ENCODE measurements at regions of chr4 and their contacts with region 1.

Region 1: DNA sequence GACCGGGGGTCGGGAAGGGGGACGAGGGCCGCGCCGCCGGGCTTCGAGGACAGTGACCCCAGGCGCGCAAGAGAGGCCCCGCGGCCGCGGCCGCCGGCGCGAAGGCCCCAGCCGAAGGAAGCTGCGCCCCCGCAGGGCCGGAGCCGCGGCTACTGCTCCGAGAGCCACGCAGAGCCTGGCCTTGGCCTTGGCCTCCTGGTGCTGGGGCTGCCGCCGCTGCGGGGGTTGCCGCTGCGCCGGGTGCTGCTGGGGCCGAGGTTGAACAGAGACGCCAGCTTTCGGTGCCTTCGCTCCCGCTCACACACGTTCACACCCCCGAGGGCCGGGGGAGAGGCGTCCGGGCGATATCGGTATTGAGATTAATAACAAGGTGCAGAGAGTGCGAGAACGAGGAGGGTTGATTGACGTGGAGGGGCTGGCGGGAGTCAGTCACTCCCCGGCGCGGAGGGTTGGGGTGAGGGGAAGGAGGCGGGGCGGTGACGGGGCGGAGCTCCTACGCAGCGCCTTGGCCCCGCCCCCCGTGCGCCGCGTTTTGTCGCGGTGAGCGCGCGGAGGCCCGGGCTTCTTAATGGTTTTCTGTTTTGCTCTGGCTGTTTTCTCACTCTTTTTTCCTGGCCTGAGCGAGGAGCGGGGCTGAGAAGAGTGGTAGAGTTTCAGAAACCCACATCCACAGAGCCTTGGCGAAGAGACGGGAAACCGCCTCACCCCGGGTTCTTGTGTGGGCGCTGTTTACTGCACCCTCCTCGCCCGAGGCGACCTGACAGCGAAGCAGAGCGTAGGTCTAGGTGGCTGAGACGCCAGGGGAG is 878 bp upstream of the CNOT6L start:
- DNase-seq: peak; percentile 95
- H3K4me3 ChIP-seq: peak overlapping the region; percentile 98 to 99
- H3K27ac ChIP-seq: peak overlapping the region; percentile 99 to 100
- H3K4me1 ChIP-seq: no peaks in the 10 kb centered on the region
- H3K27me3 ChIP-seq: no peaks in the 10 kb centered on the region
- CTCF ChIP-seq: peak in 1 of 4 experiments; percentile 11
- POLR2A ChIP-seq: peak; percentile 97

Region 2: DNA sequence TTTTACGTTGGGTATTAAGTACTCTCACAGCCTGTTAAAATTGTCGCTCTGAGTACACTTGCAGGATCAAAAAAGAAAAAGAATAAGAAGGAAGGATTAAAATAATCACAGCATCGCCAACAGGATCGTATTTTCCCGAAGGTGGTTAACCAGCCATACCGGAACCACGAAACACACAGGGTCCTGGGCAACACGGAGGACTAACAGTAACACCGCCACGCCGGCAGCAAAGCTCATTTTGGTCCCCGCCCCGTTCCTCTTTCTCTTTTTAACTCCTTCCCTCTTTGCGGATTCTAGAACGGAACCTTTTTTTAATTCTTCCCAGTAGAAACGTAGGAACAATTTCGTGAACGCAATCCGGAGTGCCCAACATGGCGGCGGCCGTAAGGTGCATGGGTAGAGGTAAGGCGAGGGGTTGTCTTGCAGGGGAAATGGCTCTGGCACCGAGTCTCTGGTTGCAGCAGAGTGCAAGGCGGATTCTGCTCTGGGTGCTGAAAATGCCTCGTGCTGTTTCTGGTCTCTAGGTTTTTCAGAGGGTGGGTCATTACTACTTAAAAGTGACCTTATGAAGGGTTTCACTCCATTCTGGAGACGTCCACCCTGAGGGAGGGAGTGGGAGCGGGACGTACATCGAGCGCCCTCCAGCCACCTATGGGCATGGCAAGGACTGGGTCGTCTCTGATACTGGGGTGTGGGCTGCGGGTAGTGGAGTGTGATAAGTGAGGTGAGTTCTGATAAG is 42.6 kb after region 1 on chr4 and contains the start of gene MRPL1:
- intact Hi-C with region 1: loop called (anchors 2 kb)
- DNase-seq: peak; percentile 92
- H3K4me3 ChIP-seq: peak within 1 kb of the TSS; percentile 48 to 53
- H3K27ac ChIP-seq: peak within 1 kb of the TSS; percentile 93 to 98
- H3K4me1 ChIP-seq: no peaks in the 10 kb centered on the region
- H3K27me3 ChIP-seq: no peaks in the 10 kb centered on the region
- CTCF ChIP-seq: peak in 1 of 4 experiments; percentile 14
- POLR2A ChIP-seq: peak; percentile 64
- total RNA-seq, gene MRPL1: 9.1 to 21.4 TPM

Region 3: DNA sequence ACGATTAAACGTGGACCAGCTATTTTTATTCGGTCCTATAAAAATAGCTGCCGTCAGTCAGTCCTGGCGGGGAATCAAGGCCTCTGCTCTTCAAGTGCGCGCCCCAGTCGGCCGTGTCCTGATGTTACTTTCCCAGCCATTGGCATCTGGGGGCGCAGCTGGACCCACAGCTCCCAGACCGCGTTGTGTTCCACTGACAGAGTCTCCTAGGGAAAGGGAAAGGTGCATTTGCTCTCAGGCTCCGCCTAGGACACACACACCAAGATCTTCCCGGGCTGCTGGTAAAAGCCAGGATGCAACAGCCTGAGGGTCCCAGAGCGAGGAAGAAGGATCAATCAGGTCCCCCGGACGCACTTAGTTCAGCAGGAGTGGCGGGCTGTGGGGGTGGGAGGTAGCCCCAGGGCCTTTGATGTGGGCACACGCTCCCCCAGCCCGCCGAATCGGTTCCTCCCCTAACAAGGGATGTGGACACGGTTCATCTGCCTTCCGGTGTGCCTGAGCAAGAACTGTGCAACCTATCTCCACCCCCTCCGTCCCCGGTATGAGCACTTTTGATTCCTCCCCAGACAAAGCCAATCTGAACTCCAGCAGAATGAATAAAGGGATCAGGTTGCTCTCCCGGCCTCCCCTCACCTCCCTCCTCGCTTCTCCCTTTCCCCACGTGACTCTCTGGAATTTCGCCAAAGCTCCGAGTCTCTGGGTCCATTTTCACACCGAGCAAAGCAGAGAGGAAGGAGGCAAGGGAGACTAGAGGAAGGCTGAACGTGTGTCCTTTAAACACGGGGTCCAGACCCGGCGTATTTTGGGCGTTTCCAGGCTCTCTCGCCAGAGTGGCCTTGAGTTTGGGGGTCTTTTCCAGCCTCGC is 236.5 kb after region 1 on chr4:
- intact Hi-C with region 1: loop called (anchors 5 kb)
- DNase-seq: peak; percentile 94
- H3K4me3 ChIP-seq: peak overlapping the region; percentile 37 to 61
- H3K27ac ChIP-seq: peak overlapping the region; percentile 84 to 91
- H3K4me1 ChIP-seq: no peaks in the 10 kb centered on the region
- H3K27me3 ChIP-seq: no peaks in the 10 kb centered on the region
- CTCF ChIP-seq: peak in 2 of 4 experiments; percentile 18 to 22
- POLR2A ChIP-seq: no peak

Region 4: DNA sequence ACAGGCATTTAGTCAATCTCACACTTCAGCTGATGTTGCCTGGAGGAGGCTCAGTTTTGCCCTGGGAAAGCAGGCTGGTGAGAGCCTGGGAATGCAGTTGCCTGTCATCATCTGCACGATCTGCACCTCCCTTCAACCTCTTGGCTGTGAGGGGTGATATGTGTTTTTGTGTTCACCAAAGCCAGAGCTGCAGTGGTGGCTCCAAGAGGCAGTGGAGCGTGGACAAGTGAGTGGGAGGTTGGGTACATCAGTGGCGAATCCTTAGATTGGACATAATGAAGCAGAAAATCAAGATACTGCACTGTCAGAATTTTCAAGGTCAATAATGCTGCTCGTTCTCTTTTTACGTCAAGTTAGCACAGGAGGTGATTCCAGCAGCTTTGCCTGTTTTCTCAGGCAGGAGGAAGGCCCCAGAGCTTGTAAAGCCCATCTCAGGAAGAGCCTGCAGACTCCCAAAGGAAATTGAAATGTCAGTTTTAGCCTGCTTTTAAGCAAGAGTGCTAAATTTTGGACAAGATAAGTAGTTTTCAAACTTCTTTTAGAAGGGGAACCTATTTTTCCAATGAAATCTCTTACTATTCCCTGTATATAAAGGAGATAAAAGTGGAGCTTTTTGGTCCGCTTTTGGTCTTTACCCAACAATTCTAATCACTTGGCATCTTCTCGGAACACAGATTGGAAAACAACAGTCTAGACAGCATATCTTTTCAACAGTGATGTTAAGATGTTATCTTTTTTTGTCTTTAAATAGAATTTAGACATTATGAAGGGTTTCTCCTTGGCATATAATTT is 329.9 kb after region 1 on chr4:
- intact Hi-C with region 1: no loop called
- DNase-seq: no peak
- H3K4me3 ChIP-seq: no peak overlapping the region
- H3K27ac ChIP-seq: no peak overlapping the region
- H3K4me1 ChIP-seq: no peaks in the 10 kb centered on the region
- H3K27me3 ChIP-seq: no peaks in the 10 kb centered on the region
- CTCF ChIP-seq: no peak
- POLR2A ChIP-seq: no peak

Region 5: DNA sequence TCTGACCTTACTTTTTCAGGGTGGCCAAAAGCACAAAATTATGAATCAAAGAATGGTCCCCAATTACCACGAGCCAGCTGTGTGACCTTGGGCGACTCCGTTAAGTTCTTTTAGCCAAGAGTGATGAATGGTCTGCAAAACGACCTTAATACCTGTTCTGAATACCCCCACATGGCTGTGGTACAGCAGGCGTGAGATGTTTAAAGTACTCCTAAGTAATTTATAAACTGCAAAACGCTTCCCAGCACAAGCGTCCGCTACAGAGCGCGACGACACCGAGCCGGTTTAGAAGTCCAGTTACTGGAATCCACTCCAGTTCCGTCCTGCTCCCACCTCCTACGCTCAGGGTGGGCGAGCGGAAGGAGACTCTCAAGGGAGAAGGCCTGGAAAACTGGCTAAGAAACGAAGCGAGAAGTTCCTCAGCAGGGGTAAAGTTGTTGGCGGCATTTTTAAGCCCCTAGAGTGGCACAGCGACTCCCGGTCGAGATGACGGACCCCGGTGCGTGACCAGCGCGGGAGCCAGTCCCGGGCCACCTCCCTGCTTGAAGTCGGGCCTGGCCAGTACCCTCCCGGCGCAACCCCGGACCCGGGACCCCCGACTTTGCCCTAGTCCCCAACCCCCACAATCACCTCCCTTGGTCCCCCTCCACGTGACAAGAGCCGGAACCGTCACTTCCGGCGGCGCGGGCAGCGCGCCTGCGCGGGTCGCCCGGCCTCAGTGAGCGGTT is 955.4 kb after region 1 on chr4:
- intact Hi-C with region 1: loop called (anchors 5 kb)
- DNase-seq: peak; percentile 86
- H3K4me3 ChIP-seq: peak overlapping the region; percentile 56 to 76
- H3K27ac ChIP-seq: peak overlapping the region; percentile 92 to 94
- H3K4me1 ChIP-seq: no peaks in the 10 kb centered on the region
- H3K27me3 ChIP-seq: no peaks in the 10 kb centered on the region
- CTCF ChIP-seq: peak in 2 of 4 experiments; percentile 0 to 4
- POLR2A ChIP-seq: no peak